ENCODE measurements at regions of chr6 and their contacts with region 1.

Region 1: DNA sequence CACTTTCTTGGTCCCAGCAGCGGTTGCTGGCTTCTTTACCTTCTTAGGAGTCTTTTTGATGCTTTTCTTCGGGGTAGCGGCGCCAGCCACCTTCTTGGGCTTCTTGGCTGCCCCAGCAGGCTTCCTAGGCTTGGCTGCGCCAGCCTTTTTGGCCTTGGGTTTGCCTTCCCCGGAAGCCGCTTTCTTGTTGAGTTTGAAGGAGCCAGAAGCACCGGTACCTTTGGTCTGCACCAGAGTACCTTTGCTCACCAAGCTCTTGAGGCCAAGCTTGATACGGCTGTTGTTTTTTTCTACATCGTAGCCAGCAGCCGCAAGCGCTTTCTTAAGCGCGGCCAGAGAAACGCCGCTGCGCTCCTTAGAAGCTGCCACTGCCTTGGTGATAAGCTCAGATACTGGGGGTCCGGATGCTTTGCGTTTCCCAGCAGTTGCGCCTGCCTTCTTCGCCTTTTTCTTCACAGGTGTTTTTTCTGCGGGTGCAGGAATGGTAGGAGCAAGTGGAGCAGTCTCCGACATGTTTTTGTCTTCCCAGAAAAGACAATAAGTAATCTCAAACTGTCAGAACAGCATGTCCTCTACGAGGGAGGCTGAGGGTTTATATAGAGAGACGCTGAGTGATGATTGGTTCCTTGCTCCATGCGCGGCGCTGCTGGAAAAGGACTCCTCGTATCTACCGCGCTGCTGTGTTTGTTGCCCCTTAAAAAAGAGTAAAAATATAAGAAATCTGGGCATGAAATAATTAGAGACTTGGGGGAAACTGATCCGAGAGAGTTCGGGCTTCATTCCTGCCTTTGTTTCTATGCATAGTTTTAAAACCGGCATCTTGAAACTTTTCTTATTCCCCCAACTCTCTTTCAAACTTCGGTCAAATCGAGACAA is 130.3 kb upstream of the BTN3A2 start:
- DNase-seq: peak; percentile 85
- H3K4me3 Mint-ChIP-seq: peak overlapping the region; percentile 82
- H3K27ac Mint-ChIP-seq: peak overlapping the region; percentile 99
- H3K4me1 Mint-ChIP-seq: peaks cover 29% of the 10 kb centered on the region
- H3K27me3 Mint-ChIP-seq: peaks cover 12% of the 10 kb centered on the region

Region 2: GRCh38 chr6:26175428-26176181 is 59.1 kb before region 1 on chr6:
- CTCF ChIA-PET with region 1: interaction called, 4 read pairs
- POLR2A ChIA-PET with region 1: interaction called, 26 read pairs
- intact Hi-C with region 1: loop called (anchors 1 kb)
- DNase-seq: peak; percentile 63
- H3K4me3 Mint-ChIP-seq: peak overlapping the region; percentile 24
- H3K27ac Mint-ChIP-seq: peak overlapping the region; percentile 43
- H3K4me1 Mint-ChIP-seq: peaks cover 31% of the 10 kb centered on the region
- H3K27me3 Mint-ChIP-seq: no peaks in the 10 kb centered on the region

Region 3: GRCh38 chr6:26196846-26197648 is 37.6 kb before region 1 on chr6:
- CTCF ChIA-PET with region 1: interaction called, 3 read pairs
- POLR2A ChIA-PET with region 1: interaction called, 206 read pairs
- intact Hi-C with region 1: loop called (anchors 1 kb)
- DNase-seq: peak; percentile 84
- H3K4me3 Mint-ChIP-seq: peak overlapping the region; percentile 86
- H3K27ac Mint-ChIP-seq: peak overlapping the region; percentile 99
- H3K4me1 Mint-ChIP-seq: peaks cover 31% of the 10 kb centered on the region
- H3K27me3 Mint-ChIP-seq: peaks cover 3% of the 10 kb centered on the region

Region 4: GRCh38 chr6:26216356-26216885 is 18.2 kb before region 1 on chr6:
- CTCF ChIA-PET with region 1: interaction called, 16 read pairs
- POLR2A ChIA-PET with region 1: interaction called, 219 read pairs
- intact Hi-C with region 1: loop called (anchors 1 kb)
- DNase-seq: peak; percentile 89
- H3K4me3 Mint-ChIP-seq: no peak overlapping the region
- H3K27ac Mint-ChIP-seq: no peak overlapping the region
- H3K4me1 Mint-ChIP-seq: peaks cover 5% of the 10 kb centered on the region
- H3K27me3 Mint-ChIP-seq: no peaks in the 10 kb centered on the region

Region 5: GRCh38 chr6:26249957-26250697 is 15.5 kb after region 1 on chr6:
- CTCF ChIA-PET with region 1: interaction called, 21 read pairs
- POLR2A ChIA-PET with region 1: interaction called, 13 read pairs
- intact Hi-C with region 1: loop called (anchors 1 kb)
- DNase-seq: peak; percentile 84
- H3K4me3 Mint-ChIP-seq: peak overlapping the region; percentile 82
- H3K27ac Mint-ChIP-seq: peak overlapping the region; percentile 99
- H3K4me1 Mint-ChIP-seq: peaks cover 22% of the 10 kb centered on the region
- H3K27me3 Mint-ChIP-seq: no peaks in the 10 kb centered on the region